CD4-positive, alpha-beta memory T cell (primary cell): ENCODE measurements at regions of chr22 and their contacts with region 1.

Region 1: DNA sequence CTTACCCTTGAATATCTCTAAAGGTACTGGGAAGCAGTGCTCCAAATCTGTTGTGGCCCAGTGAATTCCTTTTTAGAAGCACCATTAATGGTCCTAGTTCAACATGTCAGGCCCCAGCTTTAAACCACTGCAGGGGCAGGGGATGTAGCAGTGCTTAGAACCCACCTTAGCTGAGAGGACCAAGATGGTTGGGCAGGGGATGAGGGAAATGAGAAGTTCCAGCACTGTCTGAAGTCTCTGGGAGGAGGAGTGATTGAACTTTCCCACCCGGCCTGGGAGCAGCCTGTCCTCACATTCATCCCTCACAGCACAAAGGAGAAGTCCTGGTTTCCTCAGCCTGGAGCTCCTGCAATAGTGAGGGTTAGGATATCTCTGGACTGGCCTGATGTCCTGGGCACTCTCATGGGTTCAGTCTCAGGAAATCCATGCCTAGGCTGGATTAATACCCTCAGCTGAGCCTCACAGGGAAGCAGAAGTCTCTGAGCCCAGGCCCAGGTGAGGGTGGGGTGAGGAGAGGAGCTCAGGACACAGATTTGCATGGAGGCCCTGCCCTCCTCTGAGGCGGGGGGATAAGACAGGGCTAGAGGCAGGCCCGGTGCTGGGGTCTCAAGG is 28.6 kb upstream of the PRAME start:
- DNase-seq: no peak
- H3K4me3 ChIP-seq: no peak overlapping the region
- H3K4me3 Mint-ChIP-seq: no peak overlapping the region
- H3K27ac ChIP-seq: no peak overlapping the region
- H3K27ac Mint-ChIP-seq: no peak overlapping the region
- H3K4me1 ChIP-seq: no peaks in the 10 kb centered on the region
- H3K4me1 Mint-ChIP-seq: no peaks in the 10 kb centered on the region
- H3K27me3 ChIP-seq: no peaks in the 10 kb centered on the region
- H3K27me3 Mint-ChIP-seq: peaks cover 14 to 16% of the 10 kb centered on the region in 2 donors

Region 2: GRCh38 chr22:22463855-22464540 is 123.7 kb before region 1 on chr22:
- CTCF ChIA-PET with region 1: interaction called, 12 read pairs
- POLR2A ChIA-PET with region 1: no interaction called
- intact Hi-C with region 1: no loop called
- DNase-seq: peak; percentile 38 to 53 (median 49)
- H3K4me3 ChIP-seq: no peak overlapping the region
- H3K4me3 Mint-ChIP-seq: no peak overlapping the region
- H3K27ac ChIP-seq: no peak overlapping the region
- H3K27ac Mint-ChIP-seq: peak overlapping the region in 1 of 7 donors; percentile 37
- H3K4me1 ChIP-seq: no peaks in the 10 kb centered on the region
- H3K4me1 Mint-ChIP-seq: no peaks in the 10 kb centered on the region
- H3K27me3 ChIP-seq: peaks cover 4% of the 10 kb centered on the region
- H3K27me3 Mint-ChIP-seq: peaks cover 30 to 45% of the 10 kb centered on the region in 2 donors